Right ventricle myocardium inferior (tissue), 1 donor: ENCODE measurements at regions of chr17 and their contacts with region 1.

Region 1: GRCh38 chr17:17694169-17695081 is 13.2 kb downstream of the RAI1 start:
- DNase-seq: peak; percentile 91
- ATAC-seq: peak; percentile 75

Region 2: GRCh38 chr17:17356149-17356930 is 338.1 kb before region 1 on chr17:
- intact Hi-C with region 1: no loop called
- DNase-seq: no peak
- ATAC-seq: peak; percentile 89

Region 3: DNA sequence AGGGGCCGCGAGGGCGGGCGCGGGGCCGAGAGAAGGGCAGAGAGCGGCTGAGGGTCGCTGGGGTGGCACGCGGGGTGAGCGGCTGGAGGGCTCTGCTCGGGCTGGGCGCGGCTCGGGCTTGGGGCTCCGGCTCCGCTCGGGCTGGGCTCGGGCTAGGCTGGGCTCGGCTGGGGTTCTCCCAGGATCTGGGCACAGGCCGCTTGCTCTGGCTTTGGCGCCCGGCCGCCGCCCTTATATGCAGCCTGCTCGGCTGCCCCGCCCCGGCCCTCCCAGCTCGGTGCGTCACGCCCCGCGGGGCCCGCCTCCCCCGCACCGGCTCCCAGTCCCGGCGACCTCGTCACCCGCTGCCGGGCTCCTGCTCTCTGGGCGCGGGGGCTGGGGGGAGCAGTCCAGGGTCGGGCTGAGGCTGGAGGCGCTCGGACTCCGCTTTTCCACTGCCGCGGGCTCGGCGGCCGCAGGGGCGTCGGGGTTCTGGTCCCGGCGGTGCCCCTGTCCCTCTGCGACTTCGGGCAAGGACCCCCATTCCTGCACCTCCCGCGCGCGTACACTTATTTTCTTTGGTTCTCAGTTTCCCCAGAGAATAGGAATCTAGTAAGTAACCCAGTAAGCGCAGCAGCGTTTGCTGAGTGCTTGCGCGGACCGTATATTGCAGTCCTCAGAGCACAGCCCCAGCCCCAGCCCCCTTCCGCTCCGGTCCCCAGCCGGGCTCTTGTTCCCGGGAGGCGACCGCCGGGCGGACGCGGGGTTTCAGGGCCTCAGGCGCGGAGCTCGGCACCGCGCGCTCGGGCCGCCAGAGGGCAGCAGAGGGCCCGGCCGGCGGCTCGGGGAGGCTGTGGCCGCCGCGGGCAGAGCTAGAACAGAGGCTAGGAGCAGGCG is 198.0 kb before region 1 on chr17 and contains the start of gene RASD1:
- intact Hi-C with region 1: no loop called
- DNase-seq: peak; percentile 96
- ATAC-seq: peak; percentile 90
- total RNA-seq, gene RASD1: 45.3 TPM

Region 4: DNA sequence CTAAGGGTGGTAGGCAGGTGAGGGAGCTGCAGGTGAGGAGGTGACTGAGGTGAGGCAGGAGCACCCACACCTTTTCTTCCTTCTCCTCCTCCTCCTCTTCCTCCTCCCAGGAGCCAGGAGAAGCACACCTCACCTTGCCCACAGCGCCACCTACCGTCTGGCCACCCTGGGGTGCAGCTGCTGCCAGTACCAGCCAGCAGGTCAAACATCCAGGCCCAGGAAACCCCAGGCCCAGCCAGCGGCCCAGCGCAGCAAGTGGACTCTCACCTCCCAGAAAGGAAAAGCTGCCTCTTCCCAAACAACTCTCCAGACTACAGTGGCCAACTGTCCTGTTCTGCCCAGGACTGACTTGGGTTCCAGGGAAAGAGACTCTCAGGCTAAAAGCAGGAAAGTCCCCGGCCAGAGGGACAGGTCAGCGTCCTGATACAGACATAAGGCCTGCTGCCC is 125.7 kb before region 1 on chr17:
- intact Hi-C with region 1: no loop called
- DNase-seq: peak; percentile 88
- ATAC-seq: peak; percentile 35

Region 5: GRCh38 chr17:17729620-17730249 is 35.3 kb after region 1 on chr17:
- intact Hi-C with region 1: loop called (anchors 5 kb)
- DNase-seq: no peak
- ATAC-seq: no peak

Region 6: GRCh38 chr17:17757391-17757791 is 63.0 kb after region 1 on chr17:
- intact Hi-C with region 1: loop called (anchors 2 kb)
- DNase-seq: no peak
- ATAC-seq: no peak

Region 7: DNA sequence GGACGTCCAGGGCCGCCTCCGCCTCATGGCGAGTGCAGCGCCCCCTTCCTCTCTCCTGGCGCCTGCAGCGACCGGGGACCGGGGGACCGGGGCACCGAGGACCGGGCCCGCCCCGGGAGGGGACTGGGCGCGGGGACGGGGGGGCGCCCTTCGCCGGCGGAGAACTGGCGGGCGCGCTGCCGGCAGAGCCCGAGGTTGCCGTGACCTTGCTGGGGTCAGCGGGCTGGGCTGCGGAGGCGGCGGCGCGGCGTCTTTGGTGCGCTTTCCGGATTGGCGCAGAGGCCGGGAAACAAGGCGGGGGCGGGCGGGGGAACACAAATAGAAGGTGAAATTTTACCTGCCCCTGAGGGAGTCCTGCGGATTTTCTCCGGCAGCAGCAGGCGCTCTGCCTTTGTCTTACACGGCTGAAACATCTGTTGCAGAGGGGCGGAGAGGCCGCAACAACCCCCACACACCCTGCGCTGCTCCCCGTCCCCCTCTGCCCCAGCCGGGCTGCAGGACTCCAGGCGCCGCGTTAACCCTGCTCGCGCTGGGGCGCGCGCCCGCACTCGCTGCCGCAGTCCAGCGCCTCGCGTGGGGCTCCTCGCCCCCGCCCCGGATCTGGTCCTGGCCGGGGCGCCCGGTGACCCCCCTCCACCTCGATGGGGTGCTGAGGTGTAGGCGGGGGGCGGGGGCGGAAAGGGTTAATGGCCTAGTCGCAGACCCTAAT is 88.8 kb after region 1 on chr17:
- intact Hi-C with region 1: loop called (anchors 2 kb)
- DNase-seq: no peak
- ATAC-seq: peak; percentile 37

Region 8: GRCh38 chr17:17972126-17972951 is 277.9 kb after region 1 on chr17 and contains the starts of genes DRC3 and TOM1L2:
- intact Hi-C with region 1: loop called (anchors 5 kb)
- DNase-seq: peak; percentile 100
- ATAC-seq: peak; percentile 98
- total RNA-seq, gene DRC3: 1.6 TPM
- total RNA-seq, gene TOM1L2: 246 TPM